GM23248 (cell line): ENCODE measurements at regions of chr9 and their contacts with region 1.

Region 1: DNA sequence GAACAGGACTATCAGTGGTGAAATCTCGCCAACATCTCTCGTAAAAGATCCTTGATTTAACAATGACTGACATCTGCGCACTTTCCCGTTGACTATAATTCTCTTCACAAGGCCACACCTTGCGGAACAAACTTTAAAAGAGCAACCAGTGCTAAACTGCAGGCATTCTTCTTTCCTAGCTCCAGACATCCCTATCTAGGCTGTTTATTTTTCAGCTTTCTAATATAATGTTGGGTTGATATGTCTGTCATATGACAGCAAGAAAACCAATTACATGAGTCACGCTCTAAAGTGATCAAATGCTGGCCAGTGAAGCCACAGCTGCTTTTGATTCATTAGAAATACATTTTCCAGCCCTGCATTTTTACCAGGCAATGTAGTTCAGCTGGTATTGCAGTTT is 162.5 kb downstream of the ELAVL2 start:
- DNase-seq: no peak
- H3K4me3 ChIP-seq: no peak overlapping the region
- H3K27ac ChIP-seq: no peak overlapping the region
- H3K4me1 ChIP-seq: no peaks in the 10 kb centered on the region
- H3K27me3 ChIP-seq: no peaks in the 10 kb centered on the region

Region 2: GRCh38 chr9:23273779-23274178 is 389.8 kb before region 1 on chr9:
- in situ Hi-C with region 1: no loop called
- DNase-seq: no peak
- H3K4me3 ChIP-seq: no peak overlapping the region
- H3K27ac ChIP-seq: no peak overlapping the region
- H3K4me1 ChIP-seq: no peaks in the 10 kb centered on the region
- H3K27me3 ChIP-seq: no peaks in the 10 kb centered on the region

Region 3: DNA sequence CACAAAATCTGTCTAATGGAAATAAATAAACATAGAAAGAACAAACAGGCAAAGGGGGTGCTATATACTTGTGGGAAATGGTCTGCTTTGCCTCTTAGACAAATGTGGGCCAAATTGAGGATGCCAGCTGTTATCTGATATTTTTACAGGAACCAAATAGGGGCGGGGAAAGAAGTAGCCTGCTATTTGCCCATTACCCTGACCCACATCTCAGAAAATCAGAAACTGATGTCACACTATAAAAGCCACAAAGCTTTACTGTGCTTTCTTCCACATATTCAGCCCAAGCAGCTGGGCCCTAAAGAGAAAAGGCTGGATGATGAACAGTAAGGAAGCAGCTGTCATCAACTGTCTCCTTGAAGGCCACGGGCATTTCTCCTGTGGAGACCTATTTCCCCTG is 65.2 kb after region 1 on chr9:
- in situ Hi-C with region 1: loop called (anchors 10 kb)
- DNase-seq: no peak
- H3K4me3 ChIP-seq: no peak overlapping the region
- H3K27ac ChIP-seq: no peak overlapping the region
- H3K4me1 ChIP-seq: no peaks in the 10 kb centered on the region
- H3K27me3 ChIP-seq: no peaks in the 10 kb centered on the region

Region 4: GRCh38 chr9:23907343-23907742 is 243.8 kb after region 1 on chr9:
- in situ Hi-C with region 1: no loop called
- DNase-seq: no peak
- H3K4me3 ChIP-seq: no peak overlapping the region
- H3K27ac ChIP-seq: no peak overlapping the region
- H3K4me1 ChIP-seq: no peaks in the 10 kb centered on the region
- H3K27me3 ChIP-seq: no peaks in the 10 kb centered on the region